A673 (cell line): ENCODE measurements at regions of chr10 and their contacts with region 1.

Region 1: GRCh38 chr10:80699602-80700039 is 161.9 kb downstream of the SH2D4B start:
- DNase-seq: peak; percentile 82
- H3K4me3 ChIP-seq: no peak overlapping the region
- H3K27ac ChIP-seq: no peak overlapping the region
- H3K4me1 ChIP-seq: no peaks in the 10 kb centered on the region
- H3K27me3 ChIP-seq: no peaks in the 10 kb centered on the region
- CTCF ChIP-seq: peak; percentile 90

Region 2: DNA sequence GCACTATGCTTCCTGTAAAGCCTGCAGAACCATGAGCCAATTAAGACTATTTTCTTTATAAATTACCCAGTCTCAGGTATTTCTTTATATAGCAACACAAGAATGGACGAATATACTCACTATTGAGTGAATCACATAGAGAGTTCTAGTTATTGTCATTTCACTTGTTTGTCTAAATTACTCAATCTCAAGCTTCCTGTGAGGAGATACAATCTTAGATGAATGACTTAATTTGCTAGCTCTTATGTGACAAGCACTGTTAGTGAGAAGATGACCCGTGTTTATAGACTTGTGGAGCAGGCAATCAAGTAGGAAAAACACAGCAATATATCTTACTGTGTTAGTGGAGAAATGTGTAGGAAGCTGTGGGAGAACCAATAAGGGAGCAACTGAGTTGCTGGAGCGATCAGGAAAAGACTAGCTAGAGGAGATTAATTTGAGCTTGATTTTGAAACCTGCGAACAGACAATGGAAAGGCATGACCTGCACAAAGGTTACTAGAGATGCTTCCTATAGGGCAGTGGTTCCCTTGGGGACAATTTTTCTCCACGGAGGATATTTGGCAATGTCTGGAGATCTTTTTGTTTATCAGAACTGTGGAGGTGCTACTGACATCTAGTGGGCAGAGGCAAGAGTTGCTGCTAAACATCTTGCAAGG is 319.2 kb after region 1 on chr10:
- CTCF ChIA-PET with region 1: no interaction called
- POLR2A ChIA-PET with region 1: no interaction called
- intact Hi-C with region 1: loop called (anchors 1 kb)
- DNase-seq: peak; percentile 83
- H3K4me3 ChIP-seq: peak overlapping the region; percentile 17
- H3K27ac ChIP-seq: no peak overlapping the region
- H3K4me1 ChIP-seq: no peaks in the 10 kb centered on the region
- H3K27me3 ChIP-seq: no peaks in the 10 kb centered on the region
- CTCF ChIP-seq: peak; percentile 80